Transverse colon (tissue), 4 donors: ENCODE measurements at regions of chr5 and their contacts with region 1.

Region 1: GRCh38 chr5:90932052-90932699 is 373.6 kb downstream of the ADGRV1 start:
- DNase-seq: peak; percentile 47
- H3K4me3 ChIP-seq: no peak overlapping the region
- H3K27ac ChIP-seq: no peak overlapping the region
- H3K4me1 ChIP-seq: peaks cover 0 to 7% (median 2%) of the 10 kb centered on the region in 4 donors
- H3K27me3 ChIP-seq: no peaks in the 10 kb centered on the region
- CTCF ChIP-seq: peak; percentile 74 to 80 (median 78)
- EP300 ChIP-seq: no peak
- POLR2A ChIP-seq: no peak

Region 2: DNA sequence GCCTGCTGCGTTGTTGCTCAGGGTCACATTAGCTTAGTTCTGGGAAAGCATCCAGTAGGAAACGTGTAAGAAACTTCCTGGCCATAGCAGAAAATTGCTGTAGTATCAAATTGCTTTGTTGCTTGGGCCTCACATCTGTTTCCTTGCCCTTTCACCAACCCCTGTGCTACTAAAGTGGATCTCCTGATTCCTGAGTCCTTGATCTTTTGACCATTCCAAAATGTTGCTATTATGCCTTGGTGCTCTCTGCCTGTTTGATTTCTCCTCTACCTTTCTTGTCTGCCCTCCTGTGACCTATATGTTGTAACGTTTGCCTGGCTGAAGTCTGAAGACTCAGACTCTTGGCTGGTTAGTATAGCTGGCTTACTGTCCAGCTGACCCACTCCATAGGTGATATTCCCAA is 23.1 kb before region 1 on chr5:
- in situ Hi-C with region 1: no loop called
- intact Hi-C with region 1: no loop called
- DNase-seq: no peak
- H3K4me3 ChIP-seq: no peak overlapping the region
- H3K27ac ChIP-seq: no peak overlapping the region
- H3K4me1 ChIP-seq: no peaks in the 10 kb centered on the region
- H3K27me3 ChIP-seq: no peaks in the 10 kb centered on the region
- CTCF ChIP-seq: no peak
- EP300 ChIP-seq: no peak
- POLR2A ChIP-seq: no peak

Region 3: DNA sequence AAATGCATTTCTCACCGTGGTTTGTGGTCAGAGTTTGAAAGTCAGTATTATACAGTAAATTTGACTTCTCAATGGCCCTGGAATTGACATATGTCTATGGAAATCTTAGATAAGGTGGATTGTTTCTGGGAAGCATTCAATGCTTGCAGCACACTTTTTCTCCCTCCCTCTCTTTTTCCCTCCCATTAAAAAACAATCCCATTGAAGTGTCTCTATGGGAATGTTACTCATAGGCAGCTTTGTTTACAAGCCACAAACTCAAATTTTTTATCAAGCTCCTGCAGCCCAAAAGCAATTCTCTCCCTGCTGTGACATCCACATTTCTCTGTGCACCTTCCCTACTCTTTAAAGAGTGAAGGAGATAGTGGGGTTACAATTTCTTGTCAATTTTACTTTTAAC is 158.8 kb after region 1 on chr5:
- in situ Hi-C with region 1: loop called in 3 of 4 experiments (anchors 10 to 25 kb)
- intact Hi-C with region 1: loop called (anchors 5 kb)
- DNase-seq: no peak
- H3K4me3 ChIP-seq: no peak overlapping the region
- H3K27ac ChIP-seq: no peak overlapping the region
- H3K4me1 ChIP-seq: no peaks in the 10 kb centered on the region
- H3K27me3 ChIP-seq: no peaks in the 10 kb centered on the region
- CTCF ChIP-seq: no peak
- EP300 ChIP-seq: no peak
- POLR2A ChIP-seq: no peak

Region 4: DNA sequence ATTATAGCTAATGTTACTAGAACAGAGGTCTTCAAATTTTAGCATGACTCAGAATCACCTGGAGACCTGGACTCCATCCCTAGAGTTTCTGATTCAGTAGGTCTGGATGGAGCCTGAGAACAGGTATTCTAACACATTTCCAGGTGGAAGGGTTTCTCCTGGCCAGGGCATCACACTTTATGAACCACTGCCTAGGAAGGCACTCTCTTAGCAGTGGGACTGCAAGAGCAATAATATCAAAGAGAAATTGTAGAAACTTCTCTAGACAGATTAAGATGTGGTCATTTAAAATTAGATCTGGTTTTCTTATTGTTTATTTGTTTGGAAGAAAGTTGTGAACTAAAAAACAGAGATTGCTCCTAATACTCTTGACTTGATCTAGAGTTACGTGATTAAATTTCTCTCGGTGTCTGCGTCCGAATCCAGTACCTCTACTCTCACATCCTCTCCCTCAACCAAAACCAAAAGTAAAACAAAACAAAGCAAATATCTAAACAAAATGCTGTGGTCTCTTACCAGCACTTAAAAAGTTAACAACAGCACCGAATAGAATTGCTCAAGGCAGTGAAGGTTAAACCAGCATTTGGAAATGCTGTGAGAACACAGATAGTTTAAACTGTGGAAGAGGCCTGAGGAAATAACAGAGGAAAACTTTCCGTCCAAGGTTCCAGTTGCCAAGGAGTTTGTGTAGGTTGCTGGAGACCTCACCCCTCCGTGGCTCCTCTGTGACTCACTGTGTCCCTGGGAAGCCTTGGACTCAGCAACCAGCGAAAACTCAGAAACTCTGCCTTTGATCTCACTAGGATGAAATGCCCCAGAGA is 257.5 kb after region 1 on chr5:
- in situ Hi-C with region 1: loop called in 1 of 4 experiments (anchors 25 kb)
- intact Hi-C with region 1: no loop called
- DNase-seq: peak; percentile 26
- H3K4me3 ChIP-seq: peak overlapping the region in 1 of 4 donors; percentile 16
- H3K27ac ChIP-seq: peak overlapping the region; percentile 42 to 66 (median 59)
- H3K4me1 ChIP-seq: peaks cover 0 to 29% (median 4%) of the 10 kb centered on the region in 4 donors
- H3K27me3 ChIP-seq: no peaks in the 10 kb centered on the region
- CTCF ChIP-seq: no peak
- EP300 ChIP-seq: no peak
- POLR2A ChIP-seq: no peak

Region 5: GRCh38 chr5:91383027-91383955 is 451.1 kb after region 1 on chr5 and contains the start of gene ARRDC3:
- in situ Hi-C with region 1: loop called in 1 of 4 experiments (anchors 10 kb)
- intact Hi-C with region 1: loop called (anchors 10 kb)
- DNase-seq: peak; percentile 97
- H3K4me3 ChIP-seq: peak within 1 kb of the TSS; percentile 68 to 92 (median 75)
- H3K27ac ChIP-seq: peak within 1 kb of the TSS; percentile 97 to 99 (median 98)
- H3K4me1 ChIP-seq: peaks cover 5 to 23% (median 18%) of the 10 kb centered on the region in 4 donors
- H3K27me3 ChIP-seq: no peaks in the 10 kb centered on the region
- CTCF ChIP-seq: peak in 1 of 5 experiments; percentile 21
- EP300 ChIP-seq: peak; percentile 33
- POLR2A ChIP-seq: peak; percentile 99
- total RNA-seq, gene ARRDC3: 13.7 to 29.4 (median 27.5) TPM